ENCODE measurements at regions of chr10 and their contacts with region 1.

Region 1: DNA sequence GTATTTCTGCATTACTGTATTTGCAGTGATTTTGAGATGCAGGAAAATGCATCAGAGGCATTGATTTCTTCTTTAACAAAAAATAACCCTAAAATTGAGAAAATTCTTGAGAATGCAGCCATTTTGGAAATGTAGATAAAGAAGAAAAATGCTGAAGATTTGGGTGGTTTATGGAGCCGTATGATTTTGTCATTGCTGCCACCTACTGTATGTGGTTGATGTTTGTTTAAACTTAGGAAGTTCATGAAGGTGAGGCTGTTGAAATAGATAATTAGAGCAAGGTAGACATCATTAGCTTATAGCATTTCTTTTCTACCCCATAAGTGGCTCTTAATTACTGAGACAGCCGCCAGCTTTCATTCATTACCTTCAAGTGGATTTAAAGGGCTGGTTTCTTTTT is 92.1 kb upstream of the SAMD8 start:
- DNase-seq: peak in 1 of 2 donors; percentile 67
- ATAC-seq: peak; percentile 32 to 50 (median 46)
- H3K4me3 ChIP-seq: no peak overlapping the region
- H3K4me3 Mint-ChIP-seq: peak overlapping the region; percentile 74
- H3K27ac ChIP-seq: no peak overlapping the region
- H3K27ac Mint-ChIP-seq: peak overlapping the region; percentile 82 to 94
- H3K4me1 ChIP-seq: peaks cover 31% of the 10 kb centered on the region
- H3K4me1 Mint-ChIP-seq: peaks cover 51 to 70% of the 10 kb centered on the region in 2 donors
- H3K27me3 ChIP-seq: no peaks in the 10 kb centered on the region
- H3K27me3 Mint-ChIP-seq: no peaks in the 10 kb centered on the region
- CTCF ChIP-seq: peak; percentile 61

Region 2: DNA sequence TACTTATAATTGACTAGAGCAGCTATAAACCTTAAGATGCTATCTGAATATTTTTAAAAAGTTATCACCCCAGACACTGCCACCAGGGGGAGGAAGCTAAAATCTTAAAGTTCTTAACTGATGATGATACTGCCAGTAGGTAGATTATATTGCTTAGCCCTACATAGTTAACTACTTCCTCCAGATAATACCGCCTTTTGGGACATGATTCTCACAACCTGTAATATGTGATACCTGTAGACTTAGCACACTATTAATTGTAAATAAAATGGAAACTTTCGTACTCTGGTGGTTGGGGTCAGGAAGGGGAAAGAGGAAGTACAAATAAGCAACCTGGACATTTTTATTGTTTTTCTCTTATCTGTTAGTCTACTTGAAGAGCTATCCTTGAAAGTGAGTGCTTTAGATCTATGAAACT is 599.4 kb before region 1 on chr10:
- intact Hi-C with region 1: loop called (anchors 1 kb)
- DNase-seq: peak in 1 of 2 donors; percentile 63
- ATAC-seq: peak; percentile 49 to 59 (median 57)
- H3K4me3 ChIP-seq: no peak overlapping the region
- H3K4me3 Mint-ChIP-seq: no peak overlapping the region
- H3K27ac ChIP-seq: no peak overlapping the region
- H3K27ac Mint-ChIP-seq: no peak overlapping the region
- H3K4me1 ChIP-seq: no peaks in the 10 kb centered on the region
- H3K4me1 Mint-ChIP-seq: no peaks in the 10 kb centered on the region
- H3K27me3 ChIP-seq: no peaks in the 10 kb centered on the region
- H3K27me3 Mint-ChIP-seq: no peaks in the 10 kb centered on the region
- CTCF ChIP-seq: peak; percentile 69

Region 3: DNA sequence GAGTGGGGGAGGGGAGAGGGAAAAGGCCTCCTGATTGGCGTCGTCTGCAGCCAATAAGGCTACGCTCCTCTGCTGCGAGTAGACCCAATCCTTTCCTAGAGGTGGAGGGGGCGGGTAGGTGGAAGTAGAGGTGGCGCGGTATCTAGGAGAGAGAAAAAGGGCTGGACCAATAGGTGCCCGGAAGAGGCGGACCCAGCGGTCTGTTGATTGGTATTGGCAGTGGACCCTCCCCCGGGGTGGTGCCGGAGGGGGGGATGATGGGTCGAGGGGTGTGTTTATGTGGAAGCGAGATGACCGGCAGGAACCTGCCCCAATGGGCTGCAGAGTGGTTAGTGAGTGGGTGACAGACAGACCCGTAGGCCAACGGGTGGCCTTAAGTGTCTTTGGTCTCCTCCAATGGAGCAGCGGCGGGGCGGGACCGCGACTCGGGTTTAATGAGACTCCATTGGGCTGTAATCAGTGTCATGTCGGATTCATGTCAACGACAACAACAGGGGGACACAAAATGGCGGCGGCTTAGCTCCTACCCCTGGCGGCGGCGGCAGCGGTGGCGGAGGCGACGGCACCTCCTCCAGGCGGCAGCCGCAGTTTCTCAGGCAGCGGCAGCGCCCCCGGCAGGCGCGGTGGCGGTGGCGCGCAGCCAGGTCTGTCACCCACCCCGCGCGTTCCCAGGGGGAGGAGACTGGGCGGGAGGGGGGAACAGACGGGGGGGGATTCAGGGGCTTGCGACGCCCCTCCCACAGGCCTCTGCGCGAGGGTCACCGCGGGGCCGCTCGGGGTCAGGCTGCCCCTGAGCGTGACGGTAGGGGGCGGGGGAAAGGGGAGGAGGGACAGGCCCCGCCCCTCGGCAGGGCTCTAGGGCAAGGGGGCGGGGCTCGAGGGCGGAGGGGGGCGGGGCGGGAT is 193.0 kb before region 1 on chr10 and contains the start of gene KAT6B:
- intact Hi-C with region 1: loop called (anchors 1 kb)
- DNase-seq: peak; percentile 100
- ATAC-seq: peak; percentile 77 to 91 (median 78)
- H3K4me3 ChIP-seq: peak within 1 kb of the TSS; percentile 88
- H3K4me3 Mint-ChIP-seq: peak within 1 kb of the TSS; percentile 97
- H3K27ac ChIP-seq: peak within 1 kb of the TSS; percentile 87
- H3K27ac Mint-ChIP-seq: peak within 1 kb of the TSS; percentile 94 to 98
- H3K4me1 ChIP-seq: peaks cover 26% of the 10 kb centered on the region
- H3K4me1 Mint-ChIP-seq: peaks cover 48 to 50% of the 10 kb centered on the region in 2 donors
- H3K27me3 ChIP-seq: no peaks in the 10 kb centered on the region
- H3K27me3 Mint-ChIP-seq: no peaks in the 10 kb centered on the region
- CTCF ChIP-seq: no peak
- total RNA-seq, gene KAT6B: 117 to 133 (median 121) TPM

Region 4: DNA sequence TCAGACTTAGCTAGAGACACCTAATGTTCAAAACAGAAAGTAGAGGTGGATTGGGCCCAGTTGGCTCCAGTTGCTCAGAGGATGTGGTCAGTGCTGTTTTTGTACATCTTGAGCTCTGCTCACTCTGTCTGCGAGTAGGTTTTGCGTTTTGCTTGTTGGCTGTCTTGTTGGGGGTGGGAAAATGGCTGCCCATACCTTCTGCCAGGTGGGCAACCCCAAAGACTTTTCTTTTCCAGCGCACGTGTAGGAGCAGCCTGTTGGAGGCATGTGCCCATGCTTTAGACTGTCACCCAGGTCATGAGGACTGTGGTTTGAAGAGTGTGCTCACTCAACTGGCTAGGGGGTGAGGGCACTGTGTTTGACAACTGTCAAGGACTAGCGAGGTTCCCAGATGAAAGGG is 119.1 kb before region 1 on chr10:
- intact Hi-C with region 1: loop called (anchors 5 kb)
- DNase-seq: peak; percentile 34 to 47
- ATAC-seq: peak; percentile 82 to 90 (median 84)
- H3K4me3 ChIP-seq: no peak overlapping the region
- H3K4me3 Mint-ChIP-seq: peak overlapping the region; percentile 72
- H3K27ac ChIP-seq: peak overlapping the region; percentile 41
- H3K27ac Mint-ChIP-seq: peak overlapping the region; percentile 93
- H3K4me1 ChIP-seq: peaks cover 25% of the 10 kb centered on the region
- H3K4me1 Mint-ChIP-seq: peaks cover 72 to 75% of the 10 kb centered on the region in 2 donors
- H3K27me3 ChIP-seq: no peaks in the 10 kb centered on the region
- H3K27me3 Mint-ChIP-seq: no peaks in the 10 kb centered on the region
- CTCF ChIP-seq: no peak

Region 5: DNA sequence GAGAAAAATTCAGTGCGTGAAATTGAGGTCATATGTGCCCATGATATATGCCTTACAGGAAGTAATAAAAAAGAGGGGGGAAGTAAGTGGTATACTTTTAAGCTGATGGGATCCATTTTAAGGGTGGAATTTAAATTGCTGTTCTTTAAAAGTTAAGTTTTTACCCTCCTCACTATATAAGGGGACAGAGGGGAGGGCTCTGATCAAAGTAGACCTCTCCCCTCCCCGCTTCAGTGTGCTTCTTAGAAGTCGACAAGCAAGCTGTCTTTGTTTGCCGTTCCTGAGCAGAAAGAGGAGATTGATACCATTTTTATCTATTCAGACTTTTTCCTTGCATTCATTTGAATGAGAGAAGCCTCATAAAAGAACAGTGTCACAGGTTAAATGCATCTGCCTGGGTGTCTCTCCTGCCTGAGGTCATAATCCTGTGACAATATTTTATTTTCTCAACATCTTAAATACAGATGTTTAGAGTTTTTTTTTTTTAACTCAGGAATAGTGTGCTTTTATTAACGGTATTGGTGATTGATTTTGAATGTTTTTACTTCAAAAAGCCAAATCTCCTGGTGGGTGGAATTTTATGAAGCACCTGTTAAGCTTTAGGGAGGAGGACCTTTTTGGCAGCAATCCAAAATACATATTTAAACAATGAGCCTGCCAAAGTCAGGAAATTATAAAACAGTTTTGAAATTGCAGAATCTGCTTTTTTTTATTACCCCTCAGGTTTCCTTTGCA is 51.3 kb before region 1 on chr10:
- intact Hi-C with region 1: loop called (anchors 2 kb)
- DNase-seq: peak in 1 of 2 donors; percentile 54
- ATAC-seq: peak; percentile 66 to 85 (median 82)
- H3K4me3 ChIP-seq: no peak overlapping the region
- H3K4me3 Mint-ChIP-seq: peak overlapping the region; percentile 77
- H3K27ac ChIP-seq: peak overlapping the region; percentile 71
- H3K27ac Mint-ChIP-seq: peak overlapping the region; percentile 78 to 90
- H3K4me1 ChIP-seq: peaks cover 11% of the 10 kb centered on the region
- H3K4me1 Mint-ChIP-seq: peaks cover 39 to 46% of the 10 kb centered on the region in 2 donors
- H3K27me3 ChIP-seq: no peaks in the 10 kb centered on the region
- H3K27me3 Mint-ChIP-seq: no peaks in the 10 kb centered on the region
- CTCF ChIP-seq: no peak

Region 6: GRCh38 chr10:75235375-75236177 is 216.2 kb after region 1 on chr10 and contains the start of gene COMTD1:
- intact Hi-C with region 1: loop called (anchors 5 kb)
- DNase-seq: peak; percentile 92 to 95
- ATAC-seq: peak; percentile 74 to 88 (median 78)
- H3K4me3 ChIP-seq: peak within 1 kb of the TSS; percentile 74
- H3K4me3 Mint-ChIP-seq: peak within 1 kb of the TSS; percentile 84
- H3K27ac ChIP-seq: peak within 1 kb of the TSS; percentile 53
- H3K27ac Mint-ChIP-seq: peak within 1 kb of the TSS; percentile 68 to 94
- H3K4me1 ChIP-seq: peaks cover 20% of the 10 kb centered on the region
- H3K4me1 Mint-ChIP-seq: peaks cover 9 to 15% of the 10 kb centered on the region in 2 donors
- H3K27me3 ChIP-seq: no peaks in the 10 kb centered on the region
- H3K27me3 Mint-ChIP-seq: no peaks in the 10 kb centered on the region
- CTCF ChIP-seq: peak; percentile 100
- total RNA-seq, gene COMTD1: 19.9 to 25.1 (median 20.1) TPM